Heart left ventricle (tissue), 16 donors: ENCODE measurements at regions of chr6 and their contacts with region 1.

Region 1: GRCh38 chr6:56101141-56101553 is 146.2 kb downstream of the COL21A1 start:
- DNase-seq: no peak
- ATAC-seq: peak in 1 of 4 donors; percentile 41
- H3K4me3 ChIP-seq: no peak overlapping the region
- H3K27ac ChIP-seq: peak overlapping the region in 1 of 12 donors; percentile 47
- H3K4me1 ChIP-seq: peaks cover 0 to 8% (median 0%) of the 10 kb centered on the region in 12 donors
- H3K27me3 ChIP-seq: no peaks in the 10 kb centered on the region
- CTCF ChIP-seq: no peak
- POLR2A ChIP-seq: no peak

Region 2: GRCh38 chr6:56246881-56247653 is 145.9 kb after region 1 on chr6 and contains the start of gene COL21A1:
- intact Hi-C with region 1: loop called in 2 of 10 experiments (anchors 5 to 10 kb)
- DNase-seq: peak; percentile 45 to 69 (median 52)
- ATAC-seq: peak; percentile 54 to 91 (median 82)
- H3K4me3 ChIP-seq: peak within 1 kb of the TSS; percentile 13 to 67 (median 55)
- H3K27ac ChIP-seq: peak within 1 kb of the TSS in 7 of 12 donors; percentile 6 to 55 (median 27)
- H3K4me1 ChIP-seq: peaks cover 0 to 29% (median 5%) of the 10 kb centered on the region in 12 donors
- H3K27me3 ChIP-seq: peaks cover 0 to 10% (median 0%) of the 10 kb centered on the region in 9 donors
- CTCF ChIP-seq: peak in 7 of 12 donors; percentile 11 to 43 (median 28)
- POLR2A ChIP-seq: no peak
- total RNA-seq, gene COL21A1: 23.9 to 110 (median 56.3) TPM